Posterior vena cava (tissue), 2 donors: ENCODE measurements at regions of chr21 and their contacts with region 1.

Region 1: DNA sequence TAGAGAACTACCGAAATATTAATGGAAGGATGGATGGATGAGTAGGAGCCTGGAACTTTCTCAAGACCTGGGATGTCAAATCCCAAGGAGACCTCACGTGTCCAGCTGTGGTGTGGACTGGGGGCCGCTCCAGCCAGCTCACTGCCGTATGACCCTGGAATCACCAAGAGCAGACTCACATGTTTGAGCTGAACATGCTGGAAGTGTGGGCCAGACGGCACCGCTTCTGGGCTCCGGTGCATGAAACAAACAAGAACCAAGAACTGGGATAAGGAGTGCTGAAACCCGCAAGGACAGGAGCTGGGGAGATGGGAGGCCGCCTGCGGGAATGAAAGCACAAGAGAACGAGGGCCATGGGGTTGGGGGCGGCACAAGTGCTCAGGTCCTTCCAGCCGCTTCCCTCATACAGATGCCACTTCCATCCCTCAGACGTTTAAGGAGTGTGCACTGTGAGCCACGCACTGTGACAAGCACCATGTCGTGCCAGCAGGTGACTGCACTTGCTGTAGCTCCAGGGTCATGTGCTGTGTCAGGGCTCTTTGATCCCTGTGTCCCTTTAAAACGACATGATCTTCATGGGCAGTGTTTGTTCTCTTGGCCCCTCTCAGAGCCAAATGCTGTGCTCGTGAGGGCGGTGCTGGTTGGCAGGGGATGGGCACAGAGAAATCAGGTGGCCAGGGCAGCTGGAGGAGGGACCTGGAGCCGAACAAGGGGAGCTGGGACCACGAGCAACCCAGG is 19.7 kb downstream of the IL10RB start:
- DNase-seq: no peak

Region 2: DNA sequence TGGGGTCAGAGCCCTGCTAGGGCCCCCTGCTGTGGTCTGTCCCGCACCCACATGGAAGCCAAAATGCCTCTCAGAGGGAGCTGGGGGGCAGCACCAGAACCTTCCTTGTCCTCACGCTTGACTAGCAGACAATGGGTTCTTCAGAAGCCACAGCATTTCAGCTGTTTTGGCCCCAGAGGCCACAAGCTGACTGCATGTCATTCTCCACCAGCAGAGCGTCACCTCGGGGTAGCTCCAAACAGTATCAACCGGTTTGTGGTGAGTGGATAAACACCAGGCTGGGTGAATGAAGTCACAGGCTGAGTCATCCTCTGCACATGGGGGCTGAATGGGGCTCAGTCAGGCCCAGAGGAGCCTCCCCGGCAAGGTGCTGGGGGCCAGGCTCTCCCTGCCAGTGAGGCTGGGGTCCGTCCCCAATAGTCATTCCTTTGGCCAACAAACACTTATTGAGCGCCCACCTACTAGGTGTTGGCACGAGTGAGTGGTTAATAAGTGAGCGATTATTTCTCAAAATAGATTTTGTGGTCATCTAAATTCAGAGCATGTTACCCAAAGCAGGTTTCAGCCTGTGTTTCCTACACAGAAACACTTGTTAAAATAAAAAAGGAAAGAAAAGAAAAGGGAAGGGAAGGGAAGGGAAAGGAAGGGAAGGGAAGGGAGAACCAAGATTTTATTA is 206.9 kb before region 1 on chr21:
- intact Hi-C with region 1: no loop called
- DNase-seq: no peak

Region 3: DNA sequence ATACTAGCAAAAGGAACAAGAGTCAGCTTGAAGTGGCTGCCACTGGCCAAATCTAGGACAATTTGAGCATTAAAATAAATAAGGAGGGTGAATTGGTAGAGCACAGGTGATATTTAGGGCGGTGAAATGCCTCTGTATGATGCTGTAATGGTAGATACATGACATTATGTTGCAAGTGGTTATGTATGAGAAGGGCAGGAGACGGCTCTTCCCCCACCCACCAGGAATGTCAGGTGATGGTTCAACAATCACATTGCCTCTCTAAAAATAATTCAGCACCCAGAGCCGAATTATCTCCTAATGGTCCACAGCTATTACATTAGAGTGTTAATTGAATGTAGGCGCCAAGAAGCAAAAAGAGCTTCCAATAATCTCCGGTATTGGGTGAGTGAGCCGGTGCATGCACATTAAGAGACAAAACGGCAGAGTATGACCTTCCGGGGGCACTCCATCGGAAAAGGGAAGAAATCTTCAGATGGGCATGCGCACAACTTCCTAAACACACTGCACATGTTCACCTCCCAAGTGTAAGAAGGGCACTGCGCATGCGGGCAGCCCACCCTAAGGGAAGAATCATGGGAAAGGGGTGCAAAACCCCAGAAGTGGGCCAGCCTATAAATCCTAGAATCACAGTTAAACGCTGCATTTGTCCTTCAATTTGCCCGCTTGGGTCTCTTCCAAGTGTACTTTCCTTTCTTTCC is 32.0 kb after region 1 on chr21:
- intact Hi-C with region 1: loop called in 1 of 2 experiments (anchors 2 kb)
- DNase-seq: no peak

Region 4: GRCh38 chr21:33542640-33543504 is 257.0 kb after region 1 on chr21 and contains the start of gene SON:
- intact Hi-C with region 1: no loop called
- DNase-seq: peak; percentile 99
- total RNA-seq, gene SON: 220 to 221 TPM